ENCODE measurements at regions of chrX and their contacts with region 1.

Region 1: DNA sequence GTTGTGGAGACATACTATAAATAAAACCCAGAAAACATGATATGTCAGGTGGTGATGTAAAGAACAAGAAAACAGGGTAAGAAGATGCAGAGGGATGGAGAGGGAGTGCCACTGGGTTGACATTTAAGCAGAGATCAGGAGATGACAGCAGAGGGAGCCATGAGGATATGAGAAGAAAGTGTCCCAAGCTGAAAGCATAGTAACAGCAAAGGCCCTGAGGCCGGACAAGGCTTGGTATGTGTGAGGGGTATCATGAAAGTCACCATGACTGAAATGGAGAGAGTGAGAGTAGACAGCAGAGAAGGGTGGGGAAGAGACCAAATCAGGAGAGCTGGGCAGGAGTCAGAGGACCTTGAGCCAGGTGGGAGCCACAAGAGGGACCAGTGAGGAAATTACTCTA is 3.4 kb downstream of the GPKOW start:
- DNase-seq: no peak
- H3K4me3 ChIP-seq: no peak overlapping the region
- H3K27ac ChIP-seq: no peak overlapping the region
- H3K4me1 ChIP-seq: peaks cover 5% of the 10 kb centered on the region
- H3K27me3 ChIP-seq: no peaks in the 10 kb centered on the region
- CTCF ChIP-seq: no peak
- POLR2A ChIP-seq: no peak

Region 2: DNA sequence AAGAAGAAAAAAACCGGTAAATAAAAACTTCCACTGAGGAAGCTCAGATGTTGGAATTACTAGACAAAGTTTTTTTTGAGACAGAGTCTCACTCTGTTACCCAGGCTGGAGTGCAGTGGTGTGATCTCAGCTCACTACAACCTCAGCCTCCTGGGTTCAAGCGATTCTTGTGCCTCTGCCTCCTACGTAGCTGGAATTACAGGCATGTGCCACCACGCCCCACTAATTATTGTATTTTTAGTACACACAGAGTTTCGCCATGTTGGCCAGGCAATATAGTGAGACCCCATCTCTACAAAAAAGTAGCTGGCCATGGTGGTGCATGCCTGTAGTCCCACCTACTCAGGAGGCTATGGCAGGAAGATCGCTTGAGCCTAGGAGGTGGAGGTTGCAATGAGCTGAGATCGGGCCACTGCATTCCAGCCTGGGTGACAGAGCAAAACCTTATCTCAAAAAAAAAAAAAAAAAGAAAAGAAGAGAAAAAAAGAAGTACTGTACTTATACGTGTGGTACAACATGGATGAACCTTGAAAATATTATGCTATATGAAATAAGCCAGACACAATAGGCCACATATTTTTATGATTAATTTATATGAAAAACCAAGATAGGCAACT is 30.7 kb before region 1 on chrX:
- CTCF ChIA-PET with region 1: no interaction called
- POLR2A ChIA-PET with region 1: no interaction called
- dilution Hi-C with region 1: no loop called
- intact Hi-C with region 1: no loop called
- DNase-seq: no peak
- H3K4me3 ChIP-seq: no peak overlapping the region
- H3K27ac ChIP-seq: no peak overlapping the region
- H3K4me1 ChIP-seq: no peaks in the 10 kb centered on the region
- H3K27me3 ChIP-seq: no peaks in the 10 kb centered on the region
- CTCF ChIP-seq: no peak
- POLR2A ChIP-seq: no peak

Region 3: DNA sequence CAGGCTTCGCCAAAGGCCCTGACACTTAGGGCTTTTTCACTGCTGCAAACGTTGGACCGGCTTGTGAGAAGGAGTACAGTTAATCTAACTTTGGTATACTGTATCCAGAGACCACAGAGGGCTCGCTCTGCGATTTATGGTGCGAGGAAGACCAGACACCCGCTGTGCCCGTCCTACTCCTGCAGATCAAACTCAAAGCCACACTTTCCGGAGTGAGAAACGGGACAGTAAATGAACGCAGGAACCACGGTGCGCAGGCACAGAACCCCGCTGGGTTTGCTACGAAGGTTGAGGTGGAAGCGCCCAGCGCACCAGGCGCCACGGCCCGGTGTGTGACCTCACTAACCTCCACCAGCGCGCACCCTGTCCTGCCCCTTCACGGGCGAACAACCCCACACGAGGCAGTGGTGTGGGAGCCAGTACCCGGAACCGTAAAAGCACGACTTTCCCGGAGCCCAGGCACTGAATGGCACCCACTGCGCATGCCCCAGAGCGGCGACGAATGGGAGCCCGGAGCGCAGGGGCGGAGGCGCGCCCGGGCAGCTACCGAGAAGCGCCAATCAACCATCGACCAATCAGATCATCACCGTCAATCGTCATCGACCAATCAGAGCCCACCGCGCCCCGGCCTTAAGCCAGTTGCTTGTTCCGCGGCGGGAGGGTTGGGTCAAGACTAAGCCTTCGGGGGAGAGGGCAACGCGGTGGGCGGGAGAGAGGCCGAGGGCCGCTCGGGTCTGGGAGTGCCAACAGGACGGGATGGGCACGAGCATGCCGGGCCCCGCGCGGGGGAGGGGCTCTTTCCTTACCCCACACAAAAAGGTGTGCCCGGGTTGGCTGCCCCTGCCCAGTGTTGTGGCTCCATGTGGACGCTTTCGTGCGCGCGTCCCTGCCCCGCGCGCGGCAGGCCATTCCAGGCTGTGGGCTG is 19.1 kb before region 1 on chrX:
- CTCF ChIA-PET with region 1: interaction called, 3 read pairs
- POLR2A ChIA-PET with region 1: no interaction called
- dilution Hi-C with region 1: no loop called
- intact Hi-C with region 1: loop called (anchors 1 kb)
- DNase-seq: peak; percentile 94
- H3K4me3 ChIP-seq: peak overlapping the region; percentile 35 to 54 (median 50)
- H3K27ac ChIP-seq: no peak overlapping the region
- H3K4me1 ChIP-seq: no peaks in the 10 kb centered on the region
- H3K27me3 ChIP-seq: no peaks in the 10 kb centered on the region
- CTCF ChIP-seq: no peak
- POLR2A ChIP-seq: peak; percentile 39

Region 4: GRCh38 chrX:49163555-49164419 is 43.7 kb after region 1 on chrX:
- CTCF ChIA-PET with region 1: no interaction called
- POLR2A ChIA-PET with region 1: no interaction called
- dilution Hi-C with region 1: no loop called
- intact Hi-C with region 1: loop called (anchors 1 kb)
- DNase-seq: peak; percentile 80
- H3K4me3 ChIP-seq: peak overlapping the region in 1 of 3 experiments; percentile 38
- H3K27ac ChIP-seq: peak overlapping the region; percentile 79
- H3K4me1 ChIP-seq: peaks cover 21% of the 10 kb centered on the region
- H3K27me3 ChIP-seq: no peaks in the 10 kb centered on the region
- CTCF ChIP-seq: peak; percentile 63 to 69
- POLR2A ChIP-seq: no peak

Region 5: DNA sequence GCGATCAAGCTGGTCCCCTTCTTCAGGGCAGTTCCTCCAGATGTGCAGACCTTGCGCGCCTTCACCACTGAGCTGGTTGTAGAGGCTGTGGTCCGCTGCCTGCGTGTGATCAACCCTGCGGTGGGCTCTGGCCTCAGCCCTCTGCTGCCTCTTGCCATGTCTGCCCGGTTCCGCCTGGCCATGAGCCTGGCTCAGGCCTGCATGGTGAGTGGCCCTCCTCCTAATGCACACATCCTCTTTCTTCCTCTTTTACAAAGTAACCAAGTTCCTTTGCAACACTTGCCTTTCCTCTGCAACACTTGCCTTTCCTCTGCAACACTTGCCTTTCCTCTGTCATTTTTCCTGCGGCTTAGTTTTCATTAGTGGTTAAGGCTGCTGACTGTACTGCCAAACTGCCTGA is 117.0 kb after region 1 on chrX:
- CTCF ChIA-PET with region 1: no interaction called
- POLR2A ChIA-PET with region 1: no interaction called
- dilution Hi-C with region 1: no loop called
- intact Hi-C with region 1: no loop called
- DNase-seq: no peak
- H3K4me3 ChIP-seq: no peak overlapping the region
- H3K27ac ChIP-seq: no peak overlapping the region
- H3K4me1 ChIP-seq: peaks cover 2% of the 10 kb centered on the region
- H3K27me3 ChIP-seq: no peaks in the 10 kb centered on the region
- CTCF ChIP-seq: no peak
- POLR2A ChIP-seq: no peak

Region 6: DNA sequence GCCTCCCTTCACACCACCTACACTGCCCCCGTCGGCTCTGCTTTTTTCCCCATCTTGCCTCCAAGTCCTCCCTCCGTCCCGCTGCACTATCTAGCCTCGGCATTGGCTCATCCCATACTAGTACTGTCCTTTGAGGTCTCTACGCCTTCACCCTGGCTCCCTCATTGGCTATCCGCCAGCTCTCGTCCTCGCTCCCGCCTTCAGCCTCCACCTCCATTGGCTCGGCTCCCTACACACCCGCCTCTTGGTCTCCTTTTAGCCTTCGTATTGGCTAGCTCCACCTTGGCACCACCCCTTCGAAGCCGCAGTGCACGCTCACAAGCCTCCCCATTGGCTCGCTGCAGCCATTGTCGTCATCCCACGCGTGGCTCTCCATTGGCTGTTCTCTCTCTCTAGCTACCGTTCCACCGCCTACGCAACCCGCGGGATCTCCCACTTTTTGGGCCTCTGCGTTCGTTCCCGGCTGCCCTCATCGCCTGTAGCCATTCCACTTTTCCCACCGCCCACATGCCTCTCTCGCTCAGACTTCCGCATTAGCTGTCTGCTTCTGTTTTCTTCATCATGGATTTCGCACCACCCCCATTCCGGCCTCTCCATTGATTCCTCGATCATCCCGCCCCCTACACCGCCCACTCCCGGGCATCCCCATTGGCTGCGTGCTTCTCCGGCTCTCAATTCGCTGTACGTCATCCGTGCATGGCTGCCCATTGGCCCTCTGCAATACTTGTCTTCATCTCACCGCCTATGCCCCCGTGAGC is 149.1 kb after region 1 on chrX:
- CTCF ChIA-PET with region 1: no interaction called
- POLR2A ChIA-PET with region 1: no interaction called
- dilution Hi-C with region 1: no loop called
- intact Hi-C with region 1: loop called (anchors 1 kb)
- DNase-seq: peak; percentile 97
- H3K4me3 ChIP-seq: peak overlapping the region; percentile 23 to 78 (median 59)
- H3K27ac ChIP-seq: peak overlapping the region; percentile 80
- H3K4me1 ChIP-seq: no peaks in the 10 kb centered on the region
- H3K27me3 ChIP-seq: no peaks in the 10 kb centered on the region
- CTCF ChIP-seq: no peak
- POLR2A ChIP-seq: peak; percentile 67

Region 7: GRCh38 chrX:49838374-49838773 is 718.3 kb after region 1 on chrX:
- CTCF ChIA-PET with region 1: no interaction called
- POLR2A ChIA-PET with region 1: no interaction called
- dilution Hi-C with region 1: no loop called
- intact Hi-C with region 1: no loop called
- DNase-seq: peak; percentile 12
- H3K4me3 ChIP-seq: no peak overlapping the region
- H3K27ac ChIP-seq: no peak overlapping the region
- H3K4me1 ChIP-seq: no peaks in the 10 kb centered on the region
- H3K27me3 ChIP-seq: no peaks in the 10 kb centered on the region
- CTCF ChIP-seq: peak; percentile 39 to 46
- POLR2A ChIP-seq: no peak